ENCODE measurements at regions of chr7 and their contacts with region 1.

Region 1: DNA sequence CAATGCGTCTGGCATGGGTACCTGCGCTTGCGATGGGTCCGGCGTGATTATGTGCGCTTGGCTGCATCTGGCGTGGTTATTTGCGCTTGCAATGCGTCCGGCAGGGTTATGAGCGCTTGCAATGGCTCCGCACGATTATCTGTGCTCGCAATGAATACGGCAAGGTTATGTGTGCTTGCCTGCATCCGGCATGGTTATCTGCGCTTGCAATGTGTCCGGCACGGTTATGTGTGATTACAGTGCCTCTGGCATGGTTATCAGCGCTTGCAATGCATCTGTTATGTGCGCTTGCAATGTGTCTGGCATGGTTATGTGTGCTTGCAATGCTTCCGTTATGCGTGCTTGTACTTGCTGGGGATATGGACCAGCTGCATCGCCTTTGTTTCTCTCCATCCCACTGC is 37.7 kb downstream of the RBAK start:
- DNase-seq: no peak
- H3K4me3 ChIP-seq: no peak overlapping the region
- H3K27ac ChIP-seq: no peak overlapping the region
- H3K4me1 ChIP-seq: no peaks in the 10 kb centered on the region
- H3K27me3 ChIP-seq: peaks cover 27% of the 10 kb centered on the region; the same call in 1 of the 2 replicates
- CTCF ChIP-seq: no peak

Region 2: GRCh38 chr7:4797858-4798705 is 285.2 kb before region 1 on chr7:
- CTCF ChIA-PET with region 1: interaction called, 4 read pairs
- POLR2A ChIA-PET with region 1: no interaction called
- intact Hi-C with region 1: loop called (anchors 1 kb)
- DNase-seq: peak in 1 of 2 experiments; percentile 62
- H3K4me3 ChIP-seq: no peak overlapping the region
- H3K27ac ChIP-seq: no peak overlapping the region
- H3K4me1 ChIP-seq: peaks cover 7% of the 10 kb centered on the region; the same call in 1 of the 2 replicates
- H3K27me3 ChIP-seq: no peaks in the 10 kb centered on the region
- CTCF ChIP-seq: peak; percentile 67

Region 3: GRCh38 chr7:5063698-5064097 is 19.6 kb before region 1 on chr7:
- CTCF ChIA-PET with region 1: no interaction called
- POLR2A ChIA-PET with region 1: no interaction called
- intact Hi-C with region 1: no loop called
- DNase-seq: no peak
- H3K4me3 ChIP-seq: 0 out of 2 replicates have a peak overlapping the region, but pooled peaks have one; percentile 4
- H3K27ac ChIP-seq: no peak overlapping the region
- H3K4me1 ChIP-seq: no peaks in the 10 kb centered on the region
- H3K27me3 ChIP-seq: no peaks in the 10 kb centered on the region
- CTCF ChIP-seq: no peak

Region 4: DNA sequence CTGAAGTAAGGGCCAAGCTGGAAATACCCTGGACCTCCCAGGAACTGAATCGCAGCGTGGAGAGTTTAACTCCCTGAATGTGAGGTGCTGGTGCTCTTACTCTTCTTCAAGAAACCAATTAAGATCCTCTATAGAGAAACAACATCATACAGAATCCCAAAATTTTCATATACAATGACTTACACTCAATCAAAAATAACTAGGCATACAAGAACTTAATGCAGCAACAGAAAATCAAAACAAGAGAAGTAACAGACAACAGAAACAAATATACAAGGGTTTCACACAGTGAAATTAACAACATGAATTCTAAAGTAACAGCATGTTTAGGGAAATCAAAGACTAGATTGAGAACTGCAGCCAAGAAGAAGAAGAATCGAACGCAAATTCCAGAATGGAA is 660.5 kb after region 1 on chr7:
- CTCF ChIA-PET with region 1: no interaction called
- POLR2A ChIA-PET with region 1: interaction called, 13 read pairs
- intact Hi-C with region 1: no loop called
- DNase-seq: no peak
- H3K4me3 ChIP-seq: no peak overlapping the region
- H3K27ac ChIP-seq: no peak overlapping the region
- H3K4me1 ChIP-seq: no peaks in the 10 kb centered on the region
- H3K27me3 ChIP-seq: no peaks in the 10 kb centered on the region
- CTCF ChIP-seq: no peak

Region 5: GRCh38 chr7:6283391-6284390 is 1200.4 kb after region 1 on chr7:
- CTCF ChIA-PET with region 1: no interaction called
- POLR2A ChIA-PET with region 1: interaction called, 16 read pairs
- intact Hi-C with region 1: no loop called
- DNase-seq: peak; percentile 90 to 93
- H3K4me3 ChIP-seq: peak overlapping the region; percentile 48; the same call in 1 of the 2 replicates
- H3K27ac ChIP-seq: peak overlapping the region; percentile 100
- H3K4me1 ChIP-seq: peaks cover 35% of the 10 kb centered on the region
- H3K27me3 ChIP-seq: no peaks in the 10 kb centered on the region
- CTCF ChIP-seq: no peak